ENCODE measurements at regions of chr13 and their contacts with region 1.

Region 1: DNA sequence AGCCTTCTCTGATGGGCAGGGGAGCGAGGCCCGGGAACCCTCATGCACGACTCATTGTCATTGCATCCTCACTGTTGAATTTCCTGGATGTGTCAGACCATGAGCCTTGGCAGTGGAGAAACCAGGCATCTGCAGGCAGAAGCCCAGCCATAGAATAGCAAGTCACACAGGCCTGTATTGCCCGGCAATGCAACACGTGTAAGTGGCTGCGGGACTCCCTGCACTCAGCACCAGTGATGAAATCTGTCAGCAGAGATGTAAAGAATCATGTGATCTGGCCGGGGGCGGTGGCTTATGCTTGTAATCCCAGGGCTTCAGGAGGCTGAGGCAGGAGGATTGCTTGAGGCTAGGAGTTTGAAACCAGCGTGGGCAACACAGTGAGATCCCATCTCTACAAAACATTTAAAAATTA is 199.8 kb downstream of the KATNAL1 start:
- DNase-seq: no peak
- H3K4me3 ChIP-seq: no peak overlapping the region
- H3K27ac ChIP-seq: no peak overlapping the region
- H3K4me1 ChIP-seq: peaks cover 1% of the 10 kb centered on the region
- H3K27me3 ChIP-seq: peaks cover 13% of the 10 kb centered on the region
- CTCF ChIP-seq: no peak

Region 2: GRCh38 chr13:29508130-29508875 is 599.3 kb before region 1 on chr13:
- intact Hi-C with region 1: loop called (anchors 10 kb)
- DNase-seq: peak; percentile 82
- H3K4me3 ChIP-seq: peak overlapping the region; percentile 37
- H3K27ac ChIP-seq: peak overlapping the region; percentile 71
- H3K4me1 ChIP-seq: peaks cover 28% of the 10 kb centered on the region
- H3K27me3 ChIP-seq: peaks cover 20% of the 10 kb centered on the region
- CTCF ChIP-seq: peak; percentile 99

Region 3: DNA sequence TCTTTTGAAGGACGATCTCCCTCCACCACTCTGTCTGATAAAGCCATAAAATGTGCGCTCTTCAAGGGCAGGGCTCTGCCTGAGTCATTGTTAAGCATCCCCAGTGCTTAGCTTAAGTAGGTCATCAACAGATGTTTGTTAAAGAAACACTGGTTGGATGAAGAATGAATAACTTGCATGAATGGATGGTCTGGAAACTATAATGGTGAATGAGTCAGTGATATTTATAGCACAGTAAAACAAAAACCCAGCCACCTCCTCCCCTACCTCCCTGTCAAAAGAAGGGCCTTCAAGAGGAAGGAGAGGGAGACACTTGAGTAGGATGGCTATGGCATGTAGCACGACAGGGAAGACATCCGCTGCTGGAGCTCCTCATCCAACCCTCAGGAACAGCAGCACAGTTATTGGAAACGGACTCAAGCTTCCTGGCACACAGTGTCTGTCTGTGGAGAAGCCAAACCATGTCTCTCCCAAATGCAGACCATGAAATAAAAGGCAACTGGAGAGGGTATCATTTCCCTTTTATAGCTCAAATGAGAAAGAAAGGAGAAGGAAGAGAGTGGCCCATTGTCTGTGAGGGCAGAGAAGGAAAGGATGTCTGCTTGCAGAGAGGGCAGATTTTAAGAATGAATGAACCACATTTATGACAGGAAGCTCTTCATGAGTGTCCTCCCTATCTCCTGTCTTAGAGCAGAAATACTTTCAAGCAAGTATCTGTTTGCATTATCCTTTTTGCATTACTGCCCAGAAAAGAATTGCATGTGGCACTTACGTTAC is 73.7 kb before region 1 on chr13:
- intact Hi-C with region 1: no loop called
- DNase-seq: no peak
- H3K4me3 ChIP-seq: no peak overlapping the region
- H3K27ac ChIP-seq: no peak overlapping the region
- H3K4me1 ChIP-seq: peaks cover 11% of the 10 kb centered on the region
- H3K27me3 ChIP-seq: peaks cover 46% of the 10 kb centered on the region
- CTCF ChIP-seq: no peak

Measured in left ventricle myocardium inferior (tissue), 1 donor.